K562 (cell line): ENCODE measurements at regions of chr16 and their contacts with region 1.

Region 1: DNA sequence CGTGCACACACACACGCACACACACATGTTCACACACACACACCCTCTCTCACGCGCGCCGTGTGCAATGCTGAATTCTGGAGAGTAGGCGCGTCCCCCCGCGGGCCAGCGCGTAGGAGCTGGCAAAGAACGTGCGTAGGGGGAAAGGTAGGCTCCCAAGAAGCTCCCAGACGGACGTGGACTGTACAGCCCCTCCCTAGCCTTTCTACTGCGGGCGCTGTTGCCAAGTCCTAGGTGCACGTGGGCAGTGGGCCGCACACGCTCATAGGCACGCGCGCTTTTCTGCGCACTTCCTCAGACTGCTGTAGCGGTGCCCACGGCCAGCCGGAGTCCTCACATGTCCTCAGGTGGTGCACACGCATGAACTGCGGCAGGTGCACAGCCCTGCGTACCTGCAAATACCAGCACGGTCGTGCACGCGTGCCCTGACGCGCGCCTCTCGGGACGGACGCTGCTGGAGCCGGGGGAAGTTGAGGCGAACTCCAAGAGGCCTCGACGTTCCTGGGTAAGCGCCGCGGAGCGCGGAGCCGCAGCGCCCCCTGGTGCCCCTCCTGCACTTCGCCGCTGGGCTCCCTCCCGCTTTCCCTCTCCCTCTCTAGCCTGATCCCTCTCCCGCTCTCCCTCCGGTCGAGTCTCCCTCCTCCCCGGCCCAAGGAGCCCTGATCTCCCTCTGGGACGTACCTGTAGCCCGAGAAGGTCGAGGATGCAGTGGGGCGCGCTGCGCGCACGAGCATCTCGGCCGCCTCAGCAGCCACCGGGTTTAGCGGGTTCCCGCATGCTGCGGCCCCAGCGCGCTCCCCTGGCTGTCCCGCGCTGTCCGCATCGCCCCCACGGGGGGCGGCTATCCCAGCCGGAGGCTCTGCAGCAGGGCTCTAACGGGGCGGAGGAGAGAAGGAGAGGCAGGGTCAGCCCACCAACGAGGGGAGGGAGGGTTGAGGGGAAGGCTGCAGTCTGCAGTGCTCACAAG is 749 bp downstream of the GRIN2A start:
- DNase-seq: peak; percentile 60 to 78 (median 74)
- ATAC-seq: peak; percentile 95
- H3K4me3 ChIP-seq: no peak overlapping the region
- H3K27ac ChIP-seq: no peak overlapping the region
- H3K4me1 ChIP-seq: peaks cover 0 to 28% of the 10 kb centered on the region in 2 experiments; a peak in 2 of 5 replicates
- H3K27me3 ChIP-seq: peaks cover 0 to 16% of the 10 kb centered on the region in 2 experiments; a peak in 3 of 5 replicates
- CTCF ChIP-seq: peak; percentile 84 to 87 (median 86)
- EP300 ChIP-seq: no peak
- POLR2A ChIP-seq: no peak
- RAD21 ChIP-seq: peak; percentile 68 to 88

Region 2: GRCh38 chr16:9258423-9259051 is 922.9 kb before region 1 on chr16:
- CTCF ChIA-PET with region 1: interaction called, 6 read pairs
- POLR2A ChIA-PET with region 1: no interaction called
- in situ Hi-C with region 1: loop called (anchors 10 kb)
- intact Hi-C with region 1: loop called (anchors 10 kb)
- DNase-seq: peak; percentile 49 to 66 (median 58)
- ATAC-seq: peak; percentile 94
- H3K4me3 ChIP-seq: no peak overlapping the region
- H3K27ac ChIP-seq: no peak overlapping the region
- H3K4me1 ChIP-seq: no peaks in the 10 kb centered on the region
- H3K27me3 ChIP-seq: peaks cover 2 to 12% of the 10 kb centered on the region in 2 experiments; a peak in 3 of 5 replicates
- CTCF ChIP-seq: peak; percentile 80 to 86 (median 83)
- EP300 ChIP-seq: no peak
- POLR2A ChIP-seq: no peak
- RAD21 ChIP-seq: peak; percentile 53 to 84

Region 3: DNA sequence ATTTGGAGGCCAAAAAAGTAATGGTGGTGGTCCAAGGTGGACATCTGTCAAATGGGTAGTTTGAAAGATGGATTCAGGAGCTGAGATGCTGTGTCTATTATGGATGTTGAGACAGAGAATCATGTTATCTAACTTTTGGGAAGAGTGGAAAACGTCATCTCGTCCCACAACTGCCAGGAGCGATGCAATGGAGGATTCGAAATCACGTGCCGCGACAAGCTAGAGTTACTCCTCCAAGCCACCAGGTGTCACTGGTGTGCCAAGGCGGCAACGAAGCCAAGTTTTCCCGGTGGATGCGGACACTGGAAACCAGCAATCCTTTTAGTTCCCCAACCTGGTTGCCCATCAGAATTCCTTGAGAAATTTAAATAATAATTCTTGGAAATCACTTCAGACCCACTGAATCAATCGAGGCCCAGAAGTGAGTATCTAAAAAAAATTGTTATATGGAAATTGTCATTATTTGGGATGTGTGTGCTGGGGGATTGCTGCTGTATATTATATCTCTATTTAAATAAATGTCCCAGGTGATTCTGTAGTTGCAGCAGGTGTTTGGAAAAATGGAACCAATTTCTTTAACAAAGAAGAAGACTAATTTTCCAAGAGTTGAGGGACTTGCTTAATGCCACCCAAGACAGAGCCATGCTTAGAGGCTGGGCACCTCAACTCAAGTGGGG is 883.9 kb before region 1 on chr16:
- CTCF ChIA-PET with region 1: interaction called, 7 read pairs
- POLR2A ChIA-PET with region 1: no interaction called
- in situ Hi-C with region 1: no loop called
- intact Hi-C with region 1: loop called (anchors 10 kb)
- DNase-seq: peak; percentile 56 to 73 (median 64)
- ATAC-seq: peak; percentile 79
- H3K4me3 ChIP-seq: no peak overlapping the region
- H3K27ac ChIP-seq: no peak overlapping the region
- H3K4me1 ChIP-seq: no peaks in the 10 kb centered on the region; a peak in 1 of 5 replicates
- H3K27me3 ChIP-seq: 0 out of 5 replicates have a peak, but pooled peaks cover 0 to 6% of the 10 kb centered on the region in 2 experiments
- CTCF ChIP-seq: peak; percentile 76 to 82 (median 81)
- EP300 ChIP-seq: no peak
- POLR2A ChIP-seq: no peak
- RAD21 ChIP-seq: peak; percentile 72 to 84

Region 4: DNA sequence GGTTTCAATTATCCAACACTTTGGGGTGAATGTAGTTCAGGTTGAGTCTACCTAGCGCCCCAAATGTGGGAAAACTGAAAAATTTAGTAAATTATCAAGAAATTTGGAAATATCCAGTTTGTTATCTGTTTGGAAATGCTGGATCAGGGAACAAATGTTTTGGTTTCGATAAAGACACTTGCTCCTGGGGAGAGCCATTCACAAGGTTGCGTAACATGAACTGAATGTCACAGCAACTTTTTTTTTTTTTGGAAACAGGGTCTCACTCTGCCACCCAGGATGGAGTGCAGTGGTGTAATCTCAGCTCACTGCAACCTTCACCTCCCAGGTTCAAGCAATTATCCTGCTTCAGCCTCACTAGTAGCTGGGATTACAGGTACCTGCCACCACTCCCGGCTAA is 285.7 kb before region 1 on chr16:
- CTCF ChIA-PET with region 1: no interaction called
- POLR2A ChIA-PET with region 1: no interaction called
- in situ Hi-C with region 1: no loop called
- intact Hi-C with region 1: no loop called
- DNase-seq: no peak
- ATAC-seq: no peak
- H3K4me3 ChIP-seq: no peak overlapping the region
- H3K27ac ChIP-seq: no peak overlapping the region
- H3K4me1 ChIP-seq: no peaks in the 10 kb centered on the region
- H3K27me3 ChIP-seq: no peaks in the 10 kb centered on the region
- CTCF ChIP-seq: no peak
- EP300 ChIP-seq: no peak
- POLR2A ChIP-seq: no peak
- RAD21 ChIP-seq: no peak